ENCODE measurements at regions of chr9 and their contacts with region 1.

Region 1: DNA sequence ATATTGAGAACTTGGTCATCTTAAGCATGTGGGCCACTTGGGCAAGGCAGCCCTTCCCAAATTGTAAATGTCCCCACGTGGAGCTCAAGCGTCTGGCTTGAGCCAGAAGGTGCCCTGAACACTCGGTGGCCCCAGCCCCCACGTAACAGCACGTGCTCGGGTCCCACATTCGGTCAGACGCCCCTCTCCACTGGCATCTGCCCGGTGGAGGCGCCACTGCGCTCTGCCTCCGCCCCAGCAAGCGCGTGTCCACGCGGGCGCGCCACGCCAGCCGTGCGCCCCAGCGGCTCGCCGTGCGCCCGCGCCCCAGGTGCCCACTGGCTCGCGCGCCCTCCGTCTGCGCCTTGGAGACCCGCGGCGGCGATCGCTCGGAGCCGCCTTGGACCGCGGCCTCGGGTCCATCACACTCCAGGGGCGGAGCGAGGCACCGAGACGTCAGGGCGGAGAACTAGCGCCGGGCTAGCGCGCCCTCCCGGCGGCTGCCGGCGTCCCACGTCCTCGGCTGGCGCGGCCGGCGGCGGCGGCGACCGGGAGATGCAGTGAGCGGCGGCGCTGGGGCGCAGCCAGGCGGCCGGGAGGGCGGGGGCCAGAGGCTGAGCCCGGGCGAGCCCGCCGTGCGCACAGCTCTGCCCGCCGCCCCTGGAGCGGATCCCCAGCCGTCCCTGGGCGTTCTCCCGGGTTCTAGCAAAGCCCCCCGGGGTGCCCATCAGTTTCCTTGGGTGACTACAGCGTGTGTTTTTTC is at the start of gene PALM2AKAP2:
- DNase-seq: peak; percentile 70 to 81
- ATAC-seq: peak; percentile 85 to 96 (median 90)
- H3K4me3 ChIP-seq: peak within 1 kb of the TSS; percentile 63 to 86 (median 76)
- H3K27ac ChIP-seq: peak within 1 kb of the TSS; percentile 63 to 93 (median 86)
- H3K4me1 ChIP-seq: peaks cover 0 to 26% (median 4%) of the 10 kb centered on the region in 9 donors
- H3K27me3 ChIP-seq: peaks cover 0 to 32% (median 0%) of the 10 kb centered on the region in 7 donors
- CTCF ChIP-seq: peak in 6 of 9 donors; percentile 26 to 60 (median 44)
- total RNA-seq, gene PALM2AKAP2: 66.3 to 111 (median 98.8) TPM

Region 2: GRCh38 chr9:109579191-109579948 is 200.5 kb before region 1 on chr9:
- intact Hi-C with region 1: loop called in 2 of 10 experiments (anchors 1 to 10 kb)
- DNase-seq: no peak
- ATAC-seq: peak in 7 of 8 donors; percentile 28 to 80 (median 76)
- H3K4me3 ChIP-seq: no peak overlapping the region
- H3K27ac ChIP-seq: peak overlapping the region in 4 of 10 donors; percentile 11 to 39 (median 24)
- H3K4me1 ChIP-seq: peaks cover 0 to 14% (median 5%) of the 10 kb centered on the region in 9 donors
- H3K27me3 ChIP-seq: no peaks in the 10 kb centered on the region
- CTCF ChIP-seq: no peak

Region 3: GRCh38 chr9:109652964-109653363 is 126.9 kb before region 1 on chr9:
- intact Hi-C with region 1: loop called in 1 of 10 experiments (anchors 10 kb)
- DNase-seq: peak; percentile 7 to 17
- ATAC-seq: peak in 7 of 8 donors; percentile 52 to 82 (median 77)
- H3K4me3 ChIP-seq: no peak overlapping the region
- H3K27ac ChIP-seq: no peak overlapping the region
- H3K4me1 ChIP-seq: no peaks in the 10 kb centered on the region
- H3K27me3 ChIP-seq: no peaks in the 10 kb centered on the region
- CTCF ChIP-seq: peak; percentile 14 to 72 (median 45)

Region 4: DNA sequence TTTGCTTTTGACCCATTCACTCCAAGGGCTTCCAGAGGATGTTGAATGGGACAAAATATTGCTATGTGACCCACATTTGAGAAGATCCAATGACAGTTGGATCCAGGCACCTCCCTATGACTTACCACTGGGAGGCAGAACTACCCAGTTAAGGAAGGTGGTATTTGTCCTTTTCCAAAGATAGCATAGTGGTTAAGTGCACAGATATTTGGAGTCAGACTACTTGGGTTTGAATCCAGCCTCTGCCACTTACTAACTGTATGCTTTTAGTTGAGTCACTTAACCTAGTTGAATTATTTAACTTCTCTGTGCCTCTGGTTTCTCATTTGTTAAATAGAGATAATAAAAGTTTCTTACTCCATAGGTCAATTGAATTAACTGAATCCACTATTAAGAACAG is 74.4 kb before region 1 on chr9:
- intact Hi-C with region 1: loop called in 2 of 10 experiments (anchors 2 to 10 kb)
- DNase-seq: no peak
- ATAC-seq: peak in 1 of 8 donors; percentile 10
- H3K4me3 ChIP-seq: no peak overlapping the region
- H3K27ac ChIP-seq: no peak overlapping the region
- H3K4me1 ChIP-seq: peaks cover 6 to 34% (median 20%) of the 10 kb centered on the region in 9 donors
- H3K27me3 ChIP-seq: no peaks in the 10 kb centered on the region
- CTCF ChIP-seq: peak in 2 of 9 donors; percentile 21 to 30

Region 5: DNA sequence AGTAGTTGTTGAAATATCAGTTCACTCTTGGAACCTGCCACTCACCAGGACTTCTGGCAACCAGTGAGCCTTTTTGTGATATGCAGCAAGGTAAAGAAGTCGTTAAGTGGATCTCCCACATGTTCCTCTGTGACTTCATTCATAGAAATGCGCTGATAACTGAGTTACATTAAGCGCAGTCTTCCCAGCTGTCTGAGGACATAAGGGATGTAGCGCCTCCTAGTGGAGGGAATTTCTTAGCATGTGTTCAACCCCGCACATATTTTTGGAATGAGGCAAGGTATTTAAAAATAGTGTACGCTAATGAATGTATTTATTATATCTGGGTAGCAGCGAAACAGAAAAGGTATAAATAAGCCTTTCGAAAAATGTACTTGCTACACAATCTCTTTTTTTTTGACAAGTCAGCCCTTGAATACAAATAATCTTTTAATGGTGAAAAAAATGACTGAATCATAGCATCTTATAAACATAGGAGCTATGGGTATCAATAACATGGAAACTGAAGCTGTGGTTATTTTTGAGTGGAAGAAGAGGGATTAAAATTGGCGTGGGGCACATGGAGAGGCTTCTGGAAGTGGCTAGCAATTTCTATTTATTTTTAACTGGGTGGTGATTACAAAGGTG is 38.1 kb after region 1 on chr9:
- intact Hi-C with region 1: loop called in 2 of 10 experiments (anchors 2 to 5 kb)
- DNase-seq: peak in 1 of 2 donors; percentile 92
- ATAC-seq: peak; percentile 62 to 91 (median 86)
- H3K4me3 ChIP-seq: peak overlapping the region in 3 of 10 donors; percentile 5 to 17 (median 15)
- H3K27ac ChIP-seq: peak overlapping the region; percentile 9 to 83 (median 70)
- H3K4me1 ChIP-seq: peaks cover 5 to 37% (median 32%) of the 10 kb centered on the region in 9 donors
- H3K27me3 ChIP-seq: no peaks in the 10 kb centered on the region
- CTCF ChIP-seq: peak; percentile 78 to 89 (median 83)

Region 6: GRCh38 chr9:109831998-109832658 is 52.2 kb after region 1 on chr9:
- intact Hi-C with region 1: no loop called
- DNase-seq: no peak
- ATAC-seq: peak; percentile 58 to 93 (median 78)
- H3K4me3 ChIP-seq: no peak overlapping the region
- H3K27ac ChIP-seq: peak overlapping the region in 4 of 10 donors; percentile 7 to 36 (median 19)
- H3K4me1 ChIP-seq: peaks cover 0 to 47% (median 21%) of the 10 kb centered on the region in 9 donors
- H3K27me3 ChIP-seq: no peaks in the 10 kb centered on the region
- CTCF ChIP-seq: no peak

Region 7: DNA sequence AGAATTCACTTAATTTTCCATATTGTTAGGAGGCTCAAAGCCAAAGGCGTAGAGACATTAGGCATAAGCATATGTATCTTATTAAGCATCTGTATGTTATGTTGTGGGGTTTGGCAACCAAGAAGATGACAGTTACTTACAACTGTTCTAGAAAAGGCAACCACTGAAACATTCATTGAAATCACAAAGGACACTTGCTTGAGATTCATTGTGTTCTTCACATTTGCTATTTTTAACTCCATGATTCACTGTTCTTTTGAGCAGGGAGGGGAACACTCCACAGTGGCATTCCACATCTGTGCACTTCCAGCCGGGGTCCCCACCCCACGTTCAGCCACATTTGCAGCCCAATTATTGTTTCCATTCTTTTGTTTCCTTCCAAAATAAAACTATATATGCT is 107.2 kb after region 1 on chr9:
- intact Hi-C with region 1: loop called in 1 of 10 experiments (anchors 5 kb)
- DNase-seq: peak in 1 of 2 donors; percentile 19
- ATAC-seq: peak; percentile 77 to 90 (median 86)
- H3K4me3 ChIP-seq: no peak overlapping the region
- H3K27ac ChIP-seq: peak overlapping the region; percentile 31 to 81 (median 68)
- H3K4me1 ChIP-seq: peaks cover 14 to 67% (median 46%) of the 10 kb centered on the region in 9 donors
- H3K27me3 ChIP-seq: no peaks in the 10 kb centered on the region
- CTCF ChIP-seq: no peak

Region 8: DNA sequence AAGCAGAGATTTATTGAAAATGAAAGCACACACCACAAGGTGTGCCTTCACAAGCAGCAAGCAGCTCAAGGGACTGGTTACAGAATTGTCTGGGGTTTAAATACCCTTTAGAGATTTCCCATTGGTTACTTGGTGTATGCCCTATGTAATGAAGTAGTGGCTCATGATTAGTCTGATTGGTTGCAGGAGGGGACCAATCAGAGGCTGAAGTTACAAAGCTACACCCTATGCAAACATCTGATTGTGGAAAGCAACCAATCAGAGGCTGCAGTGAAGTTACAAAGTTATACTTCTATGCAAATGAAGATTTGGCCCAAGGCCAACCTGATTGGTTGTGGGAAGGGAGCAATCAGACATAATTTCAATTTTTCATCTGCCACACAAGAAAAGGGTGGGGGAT is 308.2 kb after region 1 on chr9:
- intact Hi-C with region 1: no loop called
- DNase-seq: no peak
- ATAC-seq: no peak
- H3K4me3 ChIP-seq: no peak overlapping the region
- H3K27ac ChIP-seq: no peak overlapping the region
- H3K4me1 ChIP-seq: peaks cover 6 to 90% (median 54%) of the 10 kb centered on the region in 9 donors
- H3K27me3 ChIP-seq: no peaks in the 10 kb centered on the region
- CTCF ChIP-seq: no peak

Measured in heart right ventricle (tissue), 16 donors.